ENCODE measurements at regions of chr9 and their contacts with region 1.

Region 1: DNA sequence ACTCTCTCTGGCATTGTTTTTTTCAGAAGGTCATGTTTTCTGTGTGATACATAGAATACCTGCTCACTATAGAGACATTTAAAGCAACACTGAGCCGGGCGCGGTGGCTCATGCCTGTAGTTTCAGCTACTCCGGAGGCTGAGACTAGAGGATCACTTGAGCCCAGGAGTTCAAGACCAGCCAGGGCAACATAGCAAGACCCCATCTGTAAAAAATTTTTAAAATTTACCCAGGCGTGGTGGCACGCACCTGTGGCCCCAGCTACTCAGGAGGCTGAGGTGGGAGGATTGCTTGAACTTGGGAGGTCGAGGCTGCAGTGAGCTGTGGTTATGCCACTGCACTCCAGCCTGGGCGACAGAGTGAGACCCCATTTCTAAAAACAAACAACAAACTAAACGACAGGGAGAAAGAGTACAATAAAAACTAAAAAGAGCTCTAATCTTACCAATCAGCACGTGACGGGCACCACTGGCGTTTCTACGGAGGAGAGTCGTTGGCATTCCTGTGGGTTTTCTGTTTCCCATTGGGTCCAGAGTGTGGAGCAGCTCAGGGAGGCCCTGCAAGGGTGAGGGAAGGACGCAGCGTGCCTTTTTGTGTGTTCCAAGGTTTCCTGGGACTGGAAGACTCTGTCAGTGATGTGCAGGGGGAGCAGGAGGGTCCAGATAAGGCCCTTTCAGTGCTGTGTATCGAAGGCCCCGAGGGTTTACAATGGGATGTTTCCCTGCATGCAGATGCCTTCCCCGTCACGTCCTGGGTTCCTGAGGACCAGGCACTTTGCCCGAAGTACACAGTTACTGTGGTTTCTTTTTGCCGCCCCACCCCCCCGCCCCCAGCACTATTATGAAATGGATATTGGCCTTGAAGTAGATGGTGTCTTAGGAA is 7.2 kb upstream of the RNU6ATAC start:
- DNase-seq: no peak
- ATAC-seq: no peak
- H3K4me3 Mint-ChIP-seq: no peak overlapping the region
- H3K27ac Mint-ChIP-seq: no peak overlapping the region
- H3K4me1 Mint-ChIP-seq: no peaks in the 10 kb centered on the region
- H3K27me3 Mint-ChIP-seq: no peaks in the 10 kb centered on the region

Region 2: DNA sequence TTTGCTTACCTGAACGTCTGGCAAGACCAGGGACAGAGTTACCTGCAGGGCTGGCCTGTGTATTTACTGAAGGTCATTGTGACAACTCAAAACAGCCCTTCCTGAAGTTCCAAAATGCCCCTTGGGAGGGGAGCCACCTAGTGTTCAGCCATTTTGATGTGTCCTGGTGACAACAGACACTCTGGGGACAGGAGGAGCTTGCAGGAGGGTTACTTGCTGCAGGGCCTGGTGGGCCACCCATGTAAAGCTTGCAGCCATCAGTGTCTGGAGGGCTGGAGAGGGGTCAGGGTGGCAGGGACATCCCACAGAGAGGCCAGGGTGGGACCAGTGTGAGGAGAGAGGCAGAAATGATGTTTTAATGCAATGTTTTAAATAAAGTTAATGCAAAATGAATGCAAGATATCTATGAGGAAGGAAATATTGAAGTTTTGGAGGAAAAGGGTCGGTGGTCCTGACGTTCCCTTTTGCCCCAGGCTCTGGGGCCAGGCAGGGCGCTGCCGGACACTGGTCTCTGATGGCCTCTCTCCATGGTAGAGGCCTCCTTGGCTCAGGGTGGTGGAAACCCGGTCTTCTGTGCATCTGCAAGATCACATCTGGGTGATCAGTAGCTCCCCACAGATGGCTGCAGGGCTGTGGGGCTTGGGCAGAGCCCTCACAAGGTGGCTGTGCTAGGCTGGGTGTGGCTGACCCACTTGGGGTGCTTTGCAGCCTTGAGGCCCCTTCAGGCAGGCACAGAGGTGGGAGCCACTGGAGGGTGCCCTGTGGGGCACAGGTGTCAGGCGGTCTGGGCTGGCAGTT is 46.5 kb after region 1 on chr9:
- CTCF ChIA-PET with region 1: interaction called, 15 read pairs
- DNase-seq: no peak
- ATAC-seq: no peak
- H3K4me3 Mint-ChIP-seq: no peak overlapping the region
- H3K27ac Mint-ChIP-seq: no peak overlapping the region
- H3K4me1 Mint-ChIP-seq: no peaks in the 10 kb centered on the region
- H3K27me3 Mint-ChIP-seq: no peaks in the 10 kb centered on the region

Region 3: GRCh38 chr9:134253606-134254198 is 82.1 kb after region 1 on chr9:
- CTCF ChIA-PET with region 1: no interaction called
- DNase-seq: no peak
- ATAC-seq: no peak
- H3K4me3 Mint-ChIP-seq: no peak overlapping the region
- H3K27ac Mint-ChIP-seq: no peak overlapping the region
- H3K4me1 Mint-ChIP-seq: no peaks in the 10 kb centered on the region
- H3K27me3 Mint-ChIP-seq: no peaks in the 10 kb centered on the region

Region 4: GRCh38 chr9:134301387-134302129 is 130.0 kb after region 1 on chr9:
- CTCF ChIA-PET with region 1: interaction called, 13 read pairs
- DNase-seq: peak; percentile 90
- ATAC-seq: peak; percentile 95
- H3K4me3 Mint-ChIP-seq: no peak overlapping the region
- H3K27ac Mint-ChIP-seq: peak overlapping the region; percentile 29
- H3K4me1 Mint-ChIP-seq: peaks cover 18% of the 10 kb centered on the region
- H3K27me3 Mint-ChIP-seq: peaks cover 40% of the 10 kb centered on the region

Region 5: DNA sequence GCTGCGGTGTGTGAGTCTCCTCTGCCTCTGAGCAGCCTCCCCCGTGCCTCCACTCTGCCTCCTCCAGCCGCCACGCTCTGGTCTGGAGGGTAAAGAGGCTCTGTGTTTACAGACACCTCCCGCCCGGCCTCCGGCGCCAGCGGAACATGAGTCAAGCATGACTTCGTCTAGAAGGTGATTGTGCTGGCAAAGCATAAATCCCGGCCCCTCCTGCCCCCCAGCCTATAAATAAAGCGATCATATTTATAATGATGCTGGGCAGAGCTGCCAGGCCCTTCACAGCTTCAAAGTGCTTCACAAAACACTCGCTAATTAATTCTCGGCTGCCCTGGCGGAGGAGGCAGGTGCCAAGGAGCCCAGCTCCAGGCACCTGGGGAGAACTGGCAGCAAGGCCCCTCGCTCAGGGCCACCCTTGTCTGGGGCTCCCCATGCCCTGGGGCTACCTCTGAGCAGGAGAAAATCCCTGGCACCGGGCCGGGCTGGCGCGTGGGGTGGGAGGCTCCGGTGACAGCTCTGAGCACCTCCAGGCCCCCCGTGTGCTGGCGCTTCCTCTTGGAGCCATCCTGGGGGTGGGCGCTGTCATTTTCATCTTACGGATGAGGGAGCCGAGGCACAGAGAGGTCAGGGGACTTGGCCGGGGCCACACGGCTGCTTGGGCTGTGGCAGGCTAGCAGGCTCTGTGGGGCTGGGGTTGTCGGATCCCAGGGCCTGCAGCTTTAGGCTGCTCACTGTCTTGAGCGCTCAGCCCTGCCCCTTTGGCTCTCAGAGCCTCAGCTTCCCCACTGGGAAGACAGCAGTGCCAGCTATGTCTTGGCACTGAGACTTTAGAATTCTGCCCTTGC is 242.6 kb after region 1 on chr9:
- CTCF ChIA-PET with region 1: no interaction called
- DNase-seq: no peak
- ATAC-seq: no peak
- H3K4me3 Mint-ChIP-seq: no peak overlapping the region
- H3K27ac Mint-ChIP-seq: no peak overlapping the region
- H3K4me1 Mint-ChIP-seq: peaks cover 5% of the 10 kb centered on the region
- H3K27me3 Mint-ChIP-seq: peaks cover 7% of the 10 kb centered on the region

Region 6: DNA sequence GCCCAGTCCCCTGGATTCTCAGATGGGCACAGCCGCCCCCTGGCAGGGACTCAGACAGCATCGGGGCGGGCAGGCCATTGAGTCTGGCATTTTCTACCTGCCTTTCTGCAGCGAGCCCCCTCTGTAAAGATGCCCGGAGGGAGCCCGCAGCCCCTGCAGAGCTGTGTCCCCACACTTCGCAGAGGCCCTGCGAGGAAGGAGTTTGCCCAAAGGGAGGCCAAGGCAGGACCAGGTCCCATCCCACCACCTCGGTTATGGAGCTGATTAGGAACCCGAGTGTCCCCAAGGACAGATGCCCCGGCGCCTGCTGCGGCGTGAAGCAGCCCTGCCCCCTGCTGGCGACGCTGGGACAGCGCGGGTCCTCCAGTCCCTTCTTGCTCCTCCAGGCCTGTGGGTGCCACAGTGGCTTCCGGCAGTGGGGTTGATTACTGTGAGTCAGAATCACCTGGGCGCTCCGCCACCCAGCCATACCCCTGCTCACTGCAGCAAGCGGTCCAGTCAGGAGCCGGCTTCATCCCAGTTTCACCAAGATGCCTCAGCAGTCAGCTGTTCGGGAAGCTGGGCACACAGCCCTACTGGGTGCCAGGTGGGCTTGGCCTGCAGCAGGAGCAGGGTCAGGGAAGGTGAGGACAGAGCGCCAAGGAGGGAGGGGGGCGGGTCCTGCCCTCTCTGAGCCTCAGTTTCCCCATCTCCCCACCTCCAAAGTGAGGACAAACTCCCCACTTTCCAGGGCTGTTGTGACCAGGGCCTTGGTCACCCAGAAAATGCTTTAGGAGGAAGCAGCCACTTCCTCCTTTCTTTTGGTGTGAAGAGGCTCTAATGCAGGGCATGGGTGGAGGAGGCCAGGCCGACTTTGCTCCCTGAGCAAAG is 271.8 kb after region 1 on chr9:
- CTCF ChIA-PET with region 1: interaction called, 50 read pairs
- DNase-seq: peak; percentile 94
- ATAC-seq: peak; percentile 99
- H3K4me3 Mint-ChIP-seq: no peak overlapping the region
- H3K27ac Mint-ChIP-seq: no peak overlapping the region
- H3K4me1 Mint-ChIP-seq: peaks cover 9% of the 10 kb centered on the region
- H3K27me3 Mint-ChIP-seq: peaks cover 30% of the 10 kb centered on the region

Region 7: DNA sequence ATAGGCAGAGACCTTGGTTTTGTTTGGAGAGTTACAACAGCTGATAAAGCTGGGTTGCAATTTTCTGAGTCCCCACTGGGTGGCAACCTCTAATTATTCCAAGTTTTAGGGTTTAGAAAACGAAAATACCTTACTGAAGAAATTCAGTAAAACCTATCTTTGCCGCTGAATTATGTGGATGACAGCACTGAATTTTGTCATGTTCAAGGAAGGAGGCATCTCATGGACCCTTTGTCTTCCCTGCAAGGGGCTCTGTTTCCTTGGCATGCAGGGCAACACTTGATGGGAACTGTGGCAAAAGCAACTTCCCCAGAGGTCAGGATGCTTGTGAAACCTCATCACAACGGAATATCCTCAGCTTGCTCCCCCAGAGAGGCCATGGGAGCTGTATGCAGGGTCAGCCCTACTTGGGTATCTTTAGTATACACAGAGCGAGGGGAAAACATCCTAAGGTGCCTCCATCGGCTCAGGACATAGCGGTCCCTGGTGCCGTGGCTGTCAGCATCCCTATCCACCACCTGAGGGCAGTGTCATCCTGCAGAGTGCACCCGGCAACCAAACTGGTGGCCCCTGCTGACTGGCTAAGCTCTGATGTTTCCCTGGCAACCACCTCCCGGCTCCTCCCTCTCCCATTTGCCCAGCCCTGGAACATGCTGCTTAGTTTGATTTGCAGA is 277.8 kb after region 1 on chr9:
- CTCF ChIA-PET with region 1: interaction called, 14 read pairs
- DNase-seq: peak; percentile 79
- ATAC-seq: peak; percentile 94
- H3K4me3 Mint-ChIP-seq: no peak overlapping the region
- H3K27ac Mint-ChIP-seq: no peak overlapping the region
- H3K4me1 Mint-ChIP-seq: peaks cover 1% of the 10 kb centered on the region
- H3K27me3 Mint-ChIP-seq: peaks cover 11% of the 10 kb centered on the region

Region 8: DNA sequence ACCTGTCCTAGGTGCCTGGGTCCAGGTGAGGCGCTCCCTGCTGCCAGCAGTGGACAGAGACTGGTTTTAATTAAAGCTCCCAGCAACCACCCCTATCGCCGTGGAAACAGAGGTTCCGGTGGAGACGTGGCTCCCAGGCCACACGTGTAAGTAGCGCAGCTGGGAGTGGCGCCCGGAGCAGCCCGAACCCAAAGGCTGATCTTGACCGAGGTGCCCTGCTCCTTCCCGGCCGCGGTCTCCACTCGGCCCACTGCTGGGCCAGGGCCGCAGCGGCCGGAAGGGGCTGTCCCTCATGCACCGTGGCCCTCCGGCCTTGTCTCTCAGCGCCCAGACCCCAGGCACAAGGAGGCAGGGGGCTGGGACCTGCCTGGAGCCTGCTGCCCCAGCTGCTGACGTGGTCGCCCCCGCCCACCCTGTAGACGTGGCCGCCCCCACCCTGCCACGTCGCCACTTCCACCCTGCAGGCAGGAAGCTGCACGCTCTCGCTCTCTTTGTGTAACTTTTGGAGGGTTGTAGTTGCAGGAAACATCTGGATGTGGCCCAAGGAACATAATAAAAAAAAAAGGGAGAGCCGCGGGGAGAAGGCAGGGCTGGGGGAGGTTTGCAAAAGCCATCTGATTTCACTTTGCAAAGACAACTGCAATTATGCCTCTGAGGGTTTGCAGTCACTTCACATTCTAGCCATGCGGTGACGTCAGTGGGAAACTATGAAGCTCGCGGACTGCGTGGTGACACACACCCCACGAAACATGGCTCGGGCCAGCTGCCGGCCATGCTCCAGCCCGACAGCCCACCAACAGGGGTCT is 284.6 kb after region 1 on chr9:
- CTCF ChIA-PET with region 1: interaction called, 14 read pairs
- DNase-seq: peak; percentile 83
- ATAC-seq: peak; percentile 86
- H3K4me3 Mint-ChIP-seq: peak overlapping the region; percentile 56
- H3K27ac Mint-ChIP-seq: peak overlapping the region; percentile 74
- H3K4me1 Mint-ChIP-seq: peaks cover 7% of the 10 kb centered on the region
- H3K27me3 Mint-ChIP-seq: no peaks in the 10 kb centered on the region